ENCODE measurements at regions of chr3 and their contacts with region 1.

Region 1: DNA sequence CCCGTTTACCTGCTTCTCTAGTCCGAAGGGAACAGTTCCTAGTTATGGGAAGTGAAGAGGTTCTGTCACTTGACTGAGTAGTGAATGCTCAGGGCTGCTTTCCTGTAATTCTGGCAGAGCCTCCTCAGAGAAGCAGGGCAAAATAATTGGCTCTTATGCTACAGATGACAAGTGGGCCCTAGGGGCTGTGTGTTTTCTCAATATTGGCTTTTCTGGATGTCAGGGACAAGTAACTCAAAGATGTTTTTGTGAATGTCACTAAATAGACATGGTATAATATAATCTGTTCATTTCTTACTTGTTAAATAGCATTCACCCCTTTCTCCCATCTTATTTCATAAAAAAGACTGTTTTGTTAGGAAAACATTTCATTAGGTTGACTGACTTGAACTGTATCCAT is 40.1 kb downstream of the SGO1 start:
- DNase-seq: no peak
- H3K4me3 ChIP-seq: no peak overlapping the region
- H3K4me3 Mint-ChIP-seq: peak overlapping the region; percentile 68
- H3K27ac Mint-ChIP-seq: peak overlapping the region; percentile 76
- H3K4me1 ChIP-seq: peaks cover 18% of the 10 kb centered on the region; the same call in 1 of the 2 replicates
- H3K4me1 Mint-ChIP-seq: peaks cover 13% of the 10 kb centered on the region
- H3K27me3 ChIP-seq: no peaks in the 10 kb centered on the region
- H3K27me3 Mint-ChIP-seq: no peaks in the 10 kb centered on the region
- CTCF ChIP-seq: no peak

Region 2: GRCh38 chr3:19885468-19885867 is 260.4 kb before region 1 on chr3:
- CTCF ChIA-PET with region 1: no interaction called
- POLR2A ChIA-PET with region 1: no interaction called
- intact Hi-C with region 1: loop called (anchors 1 kb)
- DNase-seq: peak in 1 of 2 experiments; percentile 28
- H3K4me3 ChIP-seq: no peak overlapping the region
- H3K4me3 Mint-ChIP-seq: no peak overlapping the region
- H3K27ac Mint-ChIP-seq: no peak overlapping the region
- H3K4me1 ChIP-seq: no peaks in the 10 kb centered on the region
- H3K4me1 Mint-ChIP-seq: no peaks in the 10 kb centered on the region
- H3K27me3 ChIP-seq: no peaks in the 10 kb centered on the region
- H3K27me3 Mint-ChIP-seq: no peaks in the 10 kb centered on the region
- CTCF ChIP-seq: peak; percentile 40 to 65

Region 3: GRCh38 chr3:20074226-20075063 is 71.4 kb before region 1 on chr3:
- CTCF ChIA-PET with region 1: no interaction called
- POLR2A ChIA-PET with region 1: no interaction called
- intact Hi-C with region 1: no loop called
- DNase-seq: no peak
- H3K4me3 ChIP-seq: no peak overlapping the region
- H3K4me3 Mint-ChIP-seq: no peak overlapping the region
- H3K27ac Mint-ChIP-seq: no peak overlapping the region
- H3K4me1 ChIP-seq: peaks cover 5% of the 10 kb centered on the region; the same call in 1 of the 2 replicates
- H3K4me1 Mint-ChIP-seq: no peaks in the 10 kb centered on the region
- H3K27me3 ChIP-seq: no peaks in the 10 kb centered on the region
- H3K27me3 Mint-ChIP-seq: no peaks in the 10 kb centered on the region
- CTCF ChIP-seq: no peak

Region 4: GRCh38 chr3:20264934-20265567 is 119.2 kb after region 1 on chr3:
- CTCF ChIA-PET with region 1: no interaction called
- POLR2A ChIA-PET with region 1: no interaction called
- intact Hi-C with region 1: no loop called
- DNase-seq: no peak
- H3K4me3 ChIP-seq: no peak overlapping the region
- H3K4me3 Mint-ChIP-seq: no peak overlapping the region
- H3K27ac Mint-ChIP-seq: no peak overlapping the region
- H3K4me1 ChIP-seq: peaks cover 6% of the 10 kb centered on the region; the same call in 1 of the 2 replicates
- H3K4me1 Mint-ChIP-seq: peaks cover 6% of the 10 kb centered on the region
- H3K27me3 ChIP-seq: no peaks in the 10 kb centered on the region
- H3K27me3 Mint-ChIP-seq: no peaks in the 10 kb centered on the region
- CTCF ChIP-seq: no peak

Measured in Caco-2 (cell line).